CD8-positive, alpha-beta memory T cell (primary cell): ENCODE measurements at regions of chr22 and their contacts with region 1.

Region 1: DNA sequence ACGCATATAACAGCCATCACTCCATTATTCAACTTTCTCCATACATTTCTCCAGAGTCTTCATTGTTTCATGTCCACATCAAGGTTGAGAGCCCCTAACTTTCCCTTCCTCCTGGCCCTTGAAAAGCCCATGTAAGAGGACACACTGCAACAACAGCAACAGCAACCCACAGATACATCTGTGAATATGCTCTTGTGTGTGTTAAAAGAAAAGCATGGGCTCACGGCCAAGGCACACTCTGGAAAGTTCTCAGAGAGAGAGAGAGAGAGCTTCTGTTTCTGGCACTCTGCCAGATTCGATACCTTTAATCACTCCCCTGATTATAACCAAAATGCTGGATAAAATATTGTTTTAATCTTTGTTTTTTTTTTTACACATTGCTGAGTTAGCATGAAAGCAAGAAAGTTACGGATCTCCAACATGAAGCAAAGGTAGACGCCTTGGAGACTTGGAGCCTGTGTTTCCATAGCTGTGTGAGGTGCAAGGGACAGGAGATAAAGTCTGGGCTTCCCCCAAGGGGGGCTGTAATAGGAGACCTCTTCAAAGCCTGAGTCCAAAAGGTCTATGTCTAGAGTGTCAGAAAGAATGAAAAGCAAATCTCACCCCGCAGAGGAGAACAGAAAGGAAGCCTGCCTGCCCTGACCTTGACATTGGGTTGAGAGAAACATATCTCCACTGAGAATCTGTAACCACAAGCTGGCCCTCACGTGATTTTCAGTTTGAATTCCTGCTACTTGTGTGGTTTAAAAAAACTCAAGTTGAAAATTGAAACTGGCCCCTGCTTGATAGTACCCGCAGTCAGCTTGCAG is 33.7 kb upstream of the MPPED1 start:
- DNase-seq: no peak
- H3K4me3 ChIP-seq: no peak overlapping the region
- H3K4me3 Mint-ChIP-seq: peak overlapping the region; percentile 24 to 71 (median 46)
- H3K27ac ChIP-seq: no peak overlapping the region
- H3K27ac Mint-ChIP-seq: peak overlapping the region in 5 of 8 donors; percentile 23 to 64 (median 63)
- H3K4me1 ChIP-seq: peaks cover 24% of the 10 kb centered on the region
- H3K4me1 Mint-ChIP-seq: peaks cover 35 to 60% (median 48%) of the 10 kb centered on the region in 3 donors
- H3K27me3 ChIP-seq: peaks cover 23% of the 10 kb centered on the region
- H3K27me3 Mint-ChIP-seq: peaks cover 31 to 36% of the 10 kb centered on the region in 2 donors

Region 2: GRCh38 chr22:43230971-43231723 is 147.0 kb before region 1 on chr22:
- CTCF ChIA-PET with region 1: interaction called, 11 read pairs
- POLR2A ChIA-PET with region 1: no interaction called
- DNase-seq: peak; percentile 41 to 76 (median 49)
- H3K4me3 ChIP-seq: no peak overlapping the region
- H3K4me3 Mint-ChIP-seq: no peak overlapping the region
- H3K27ac ChIP-seq: no peak overlapping the region
- H3K27ac Mint-ChIP-seq: no peak overlapping the region
- H3K4me1 ChIP-seq: peaks cover 4% of the 10 kb centered on the region
- H3K4me1 Mint-ChIP-seq: peaks cover 4 to 5% (median 5%) of the 10 kb centered on the region in 3 donors
- H3K27me3 ChIP-seq: no peaks in the 10 kb centered on the region
- H3K27me3 Mint-ChIP-seq: peaks cover 3 to 8% of the 10 kb centered on the region in 2 donors

Region 3: DNA sequence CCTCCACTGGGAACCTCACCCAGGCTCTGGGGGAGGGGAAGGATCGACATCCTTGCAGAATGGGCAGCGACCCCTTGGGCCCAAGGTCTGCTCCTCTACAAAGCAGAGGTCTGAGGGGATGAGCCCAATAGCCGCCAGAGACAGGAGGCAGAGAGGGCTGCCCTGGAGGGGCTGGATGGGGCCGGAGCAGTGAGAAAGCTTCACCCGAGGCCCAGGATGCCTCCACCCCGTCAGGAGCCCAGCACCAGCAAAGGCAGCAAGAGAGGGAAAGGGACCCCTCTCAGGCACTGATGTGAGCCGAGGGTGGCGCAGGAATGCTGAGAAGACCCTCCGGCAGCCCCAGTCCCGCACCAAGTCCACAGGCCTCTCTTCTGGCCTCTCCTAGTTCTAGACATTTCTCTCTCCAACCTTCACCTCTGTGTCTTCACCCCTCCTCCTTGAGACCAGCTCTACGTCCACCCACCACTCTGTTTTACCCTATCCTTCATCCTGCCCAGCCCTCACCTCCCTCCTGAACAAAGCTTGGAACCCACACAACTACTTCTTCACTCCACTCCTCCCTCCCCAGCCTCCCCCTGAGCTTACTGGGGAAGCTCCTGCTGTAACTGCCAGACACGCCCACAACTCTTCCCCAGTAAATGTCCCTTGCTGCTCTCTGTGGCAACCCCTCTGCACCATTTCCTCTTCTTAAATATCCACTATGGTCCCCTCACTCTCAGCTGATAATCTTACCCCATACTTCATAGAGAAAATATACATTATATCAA is 165.6 kb after region 1 on chr22:
- CTCF ChIA-PET with region 1: no interaction called
- POLR2A ChIA-PET with region 1: no interaction called
- DNase-seq: no peak
- H3K4me3 ChIP-seq: no peak overlapping the region
- H3K4me3 Mint-ChIP-seq: no peak overlapping the region
- H3K27ac ChIP-seq: no peak overlapping the region
- H3K27ac Mint-ChIP-seq: no peak overlapping the region
- H3K4me1 ChIP-seq: no peaks in the 10 kb centered on the region
- H3K4me1 Mint-ChIP-seq: no peaks in the 10 kb centered on the region
- H3K27me3 ChIP-seq: peaks cover 4% of the 10 kb centered on the region
- H3K27me3 Mint-ChIP-seq: peaks cover 7 to 43% of the 10 kb centered on the region in 2 donors